A673 (cell line): ENCODE measurements at regions of chr11 and their contacts with region 1.

Region 1: GRCh38 chr11:22130462-22131053 is 62.3 kb upstream of the ANO5 start:
- DNase-seq: peak; percentile 67
- H3K4me3 ChIP-seq: no peak overlapping the region
- H3K27ac ChIP-seq: no peak overlapping the region
- H3K4me1 ChIP-seq: peaks cover 9% of the 10 kb centered on the region
- H3K27me3 ChIP-seq: no peaks in the 10 kb centered on the region
- CTCF ChIP-seq: peak; percentile 65

Region 2: GRCh38 chr11:20647976-20648565 is 1482.5 kb before region 1 on chr11:
- CTCF ChIA-PET with region 1: no interaction called
- POLR2A ChIA-PET with region 1: no interaction called
- intact Hi-C with region 1: loop called (anchors 10 kb)
- DNase-seq: peak; percentile 55
- H3K4me3 ChIP-seq: no peak overlapping the region
- H3K27ac ChIP-seq: no peak overlapping the region
- H3K4me1 ChIP-seq: no peaks in the 10 kb centered on the region
- H3K27me3 ChIP-seq: no peaks in the 10 kb centered on the region
- CTCF ChIP-seq: peak; percentile 77

Region 3: GRCh38 chr11:21511835-21512440 is 618.6 kb before region 1 on chr11:
- CTCF ChIA-PET with region 1: no interaction called
- POLR2A ChIA-PET with region 1: no interaction called
- intact Hi-C with region 1: loop called (anchors 5 kb)
- DNase-seq: peak; percentile 85
- H3K4me3 ChIP-seq: no peak overlapping the region
- H3K27ac ChIP-seq: no peak overlapping the region
- H3K4me1 ChIP-seq: no peaks in the 10 kb centered on the region
- H3K27me3 ChIP-seq: no peaks in the 10 kb centered on the region
- CTCF ChIP-seq: peak; percentile 82

Region 4: GRCh38 chr11:21866781-21867180 is 263.8 kb before region 1 on chr11:
- CTCF ChIA-PET with region 1: no interaction called
- POLR2A ChIA-PET with region 1: no interaction called
- intact Hi-C with region 1: loop called (anchors 2 kb)
- DNase-seq: peak; percentile 52
- H3K4me3 ChIP-seq: no peak overlapping the region
- H3K27ac ChIP-seq: no peak overlapping the region
- H3K4me1 ChIP-seq: peaks cover 5% of the 10 kb centered on the region
- H3K27me3 ChIP-seq: no peaks in the 10 kb centered on the region
- CTCF ChIP-seq: no peak

Region 5: DNA sequence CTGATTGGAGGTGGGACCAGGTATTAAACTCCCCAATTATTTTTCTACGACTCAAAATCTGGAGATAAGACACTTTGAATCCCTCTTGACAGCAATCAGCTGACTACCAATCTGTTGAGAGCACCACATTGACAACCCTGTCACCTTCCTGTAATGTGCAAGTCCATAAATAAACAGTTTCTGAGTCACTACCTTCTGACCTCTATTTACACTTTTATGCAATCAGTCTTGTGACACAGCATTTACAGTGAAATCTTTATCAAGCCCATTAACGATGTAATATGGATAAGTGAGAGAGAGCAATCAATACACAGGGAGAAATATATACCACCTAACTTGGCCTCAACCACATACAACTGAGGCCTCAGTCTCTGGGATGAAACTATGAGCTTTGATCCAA is 221.4 kb before region 1 on chr11:
- CTCF ChIA-PET with region 1: no interaction called
- POLR2A ChIA-PET with region 1: no interaction called
- intact Hi-C with region 1: loop called (anchors 1 kb)
- DNase-seq: peak; percentile 42
- H3K4me3 ChIP-seq: no peak overlapping the region
- H3K27ac ChIP-seq: peak overlapping the region; percentile 77
- H3K4me1 ChIP-seq: peaks cover 81% of the 10 kb centered on the region
- H3K27me3 ChIP-seq: no peaks in the 10 kb centered on the region
- CTCF ChIP-seq: no peak

Region 6: GRCh38 chr11:22084056-22084455 is 46.5 kb before region 1 on chr11:
- CTCF ChIA-PET with region 1: no interaction called
- POLR2A ChIA-PET with region 1: no interaction called
- intact Hi-C with region 1: no loop called
- DNase-seq: no peak
- H3K4me3 ChIP-seq: no peak overlapping the region
- H3K27ac ChIP-seq: no peak overlapping the region
- H3K4me1 ChIP-seq: no peaks in the 10 kb centered on the region
- H3K27me3 ChIP-seq: no peaks in the 10 kb centered on the region
- CTCF ChIP-seq: no peak

Region 7: GRCh38 chr11:23211221-23211620 is 1080.7 kb after region 1 on chr11:
- CTCF ChIA-PET with region 1: no interaction called
- POLR2A ChIA-PET with region 1: no interaction called
- intact Hi-C with region 1: no loop called
- DNase-seq: no peak
- H3K4me3 ChIP-seq: no peak overlapping the region
- H3K27ac ChIP-seq: no peak overlapping the region
- H3K4me1 ChIP-seq: no peaks in the 10 kb centered on the region
- H3K27me3 ChIP-seq: no peaks in the 10 kb centered on the region
- CTCF ChIP-seq: no peak